Astrocyte of the cerebellum (primary cell): ENCODE measurements at regions of chr1 and their contacts with region 1.

Region 1: GRCh38 chr1:22105611-22106207 is 37.2 kb downstream of the WNT4 start:
- DNase-seq: peak; percentile 64
- H3K4me3 ChIP-seq: no peak overlapping the region
- CTCF ChIP-seq: peak; percentile 85

Region 2: GRCh38 chr1:22153660-22154437 is 48.1 kb after region 1 on chr1:
- in situ Hi-C with region 1: no loop called
- DNase-seq: no peak
- H3K4me3 ChIP-seq: no peak overlapping the region
- CTCF ChIP-seq: no peak

Region 3: GRCh38 chr1:22195802-22196440 is 90.2 kb after region 1 on chr1:
- in situ Hi-C with region 1: no loop called
- DNase-seq: no peak
- H3K4me3 ChIP-seq: no peak overlapping the region
- CTCF ChIP-seq: no peak

Region 4: GRCh38 chr1:22208235-22208972 is 102.7 kb after region 1 on chr1:
- in situ Hi-C with region 1: no loop called
- DNase-seq: no peak
- H3K4me3 ChIP-seq: no peak overlapping the region
- CTCF ChIP-seq: peak; percentile 7

Region 5: GRCh38 chr1:22388671-22389450 is 283.2 kb after region 1 on chr1:
- in situ Hi-C with region 1: loop called (anchors 25 kb)
- DNase-seq: no peak
- H3K4me3 ChIP-seq: no peak overlapping the region
- CTCF ChIP-seq: no peak

Region 6: DNA sequence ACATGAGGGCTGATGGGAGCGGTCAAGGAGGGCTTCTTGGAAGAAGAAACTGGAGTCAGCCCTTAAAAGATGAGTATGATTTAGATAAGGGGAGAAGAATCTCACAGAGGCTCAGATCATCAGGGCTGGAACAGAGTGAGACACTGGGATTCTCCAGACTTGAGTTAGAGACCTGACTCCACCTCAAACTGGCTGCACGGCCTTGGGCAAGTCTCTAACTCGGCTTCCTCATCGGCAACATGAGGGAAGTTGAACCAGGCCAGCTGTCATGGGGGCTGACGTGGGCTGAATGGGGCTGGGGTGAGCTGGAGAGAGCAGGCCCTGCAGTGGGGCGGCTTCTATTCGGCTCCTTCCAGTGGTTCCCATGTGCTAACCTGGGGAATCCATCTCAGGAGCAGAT is 540.2 kb after region 1 on chr1:
- in situ Hi-C with region 1: loop called (anchors 5 kb)
- DNase-seq: no peak
- H3K4me3 ChIP-seq: no peak overlapping the region
- CTCF ChIP-seq: no peak